CD4-positive, alpha-beta memory T cell (primary cell): ENCODE measurements at regions of chr9 and their contacts with region 1.

Region 1: GRCh38 chr9:77374266-77374665 is 196.9 kb downstream of the VPS13A start:
- DNase-seq: no peak
- H3K4me3 ChIP-seq: no peak overlapping the region
- H3K4me3 Mint-ChIP-seq: no peak overlapping the region
- H3K27ac ChIP-seq: no peak overlapping the region
- H3K27ac Mint-ChIP-seq: no peak overlapping the region
- H3K4me1 ChIP-seq: no peaks in the 10 kb centered on the region
- H3K4me1 Mint-ChIP-seq: no peaks in the 10 kb centered on the region
- H3K27me3 ChIP-seq: no peaks in the 10 kb centered on the region
- H3K27me3 Mint-ChIP-seq: no peaks in the 10 kb centered on the region

Region 2: DNA sequence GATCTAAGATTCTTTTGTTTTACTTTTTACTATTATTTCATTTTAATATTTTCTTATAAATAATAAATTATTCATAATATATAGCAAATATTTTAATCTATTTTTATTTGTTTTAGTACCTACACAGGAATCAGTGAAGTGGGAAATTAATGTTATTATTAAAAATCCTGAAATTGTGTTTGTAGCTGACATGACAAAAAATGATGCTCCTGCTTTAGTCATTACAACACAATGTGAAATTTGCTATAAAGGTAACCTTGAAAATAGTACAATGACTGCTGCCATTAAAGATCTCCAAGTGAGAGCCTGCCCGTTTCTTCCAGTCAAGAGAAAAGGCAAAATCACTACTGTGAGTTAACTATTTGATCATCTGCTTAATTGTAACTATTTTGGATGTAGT is 58.2 kb before region 1 on chr9:
- CTCF ChIA-PET with region 1: no interaction called
- POLR2A ChIA-PET with region 1: no interaction called
- intact Hi-C with region 1: loop called (anchors 5 kb)
- DNase-seq: no peak
- H3K4me3 ChIP-seq: no peak overlapping the region
- H3K4me3 Mint-ChIP-seq: no peak overlapping the region
- H3K27ac ChIP-seq: no peak overlapping the region
- H3K27ac Mint-ChIP-seq: no peak overlapping the region
- H3K4me1 ChIP-seq: no peaks in the 10 kb centered on the region
- H3K4me1 Mint-ChIP-seq: no peaks in the 10 kb centered on the region
- H3K27me3 ChIP-seq: no peaks in the 10 kb centered on the region
- H3K27me3 Mint-ChIP-seq: no peaks in the 10 kb centered on the region